ENCODE measurements at regions of chr9 and their contacts with region 1.

Region 1: DNA sequence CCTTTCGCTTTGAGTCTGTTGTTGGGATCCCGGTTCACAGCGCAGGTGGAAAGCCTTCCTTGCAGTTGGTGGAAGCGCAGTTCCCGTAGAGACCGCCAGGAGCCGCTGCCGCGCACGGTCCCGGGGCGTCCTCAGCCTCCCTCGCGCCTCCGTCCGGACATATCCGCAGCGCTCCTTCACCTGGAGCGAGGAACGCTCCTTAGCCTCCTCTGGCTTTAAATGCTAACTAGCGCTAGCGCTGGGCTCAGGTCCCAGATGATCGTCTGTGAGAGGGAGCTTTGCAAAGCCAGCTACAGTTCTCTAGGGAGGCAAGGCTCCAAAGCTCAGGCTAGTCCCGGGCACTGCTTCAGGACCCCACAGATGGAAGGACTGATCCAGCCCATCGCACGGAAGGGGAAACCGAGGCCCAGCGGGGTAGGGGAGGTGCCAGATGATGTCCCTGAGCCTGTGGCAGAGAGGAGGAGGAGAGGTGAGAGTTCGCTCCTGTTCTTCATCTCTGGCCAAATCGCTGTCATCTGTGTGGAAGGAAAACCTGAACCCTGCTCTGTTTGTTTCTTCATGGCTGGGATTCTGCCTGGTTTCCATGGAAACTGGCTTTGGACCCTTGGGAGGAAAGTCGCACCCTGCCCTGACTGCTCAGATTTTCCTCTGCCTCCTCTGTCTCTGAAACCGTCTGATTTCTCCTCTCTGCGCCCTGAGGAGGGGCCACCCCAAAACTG is 31.4 kb downstream of the COL15A1 start:
- DNase-seq: peak; percentile 87 to 91
- ATAC-seq: peak; percentile 60 to 80 (median 72)
- H3K4me3 ChIP-seq: peak overlapping the region in 9 of 10 donors; percentile 2 to 44 (median 34)
- H3K27ac ChIP-seq: peak overlapping the region; percentile 20 to 92 (median 72)
- H3K4me1 ChIP-seq: peaks cover 33 to 100% (median 80%) of the 10 kb centered on the region in 9 donors
- H3K27me3 ChIP-seq: peaks cover 0 to 15% (median 0%) of the 10 kb centered on the region in 7 donors
- CTCF ChIP-seq: peak; percentile 98 to 100 (median 99)

Region 2: GRCh38 chr9:98848450-98849149 is 126.6 kb before region 1 on chr9:
- intact Hi-C with region 1: no loop called
- DNase-seq: peak; percentile 89 to 92
- ATAC-seq: peak; percentile 95 to 99 (median 98)
- H3K4me3 ChIP-seq: peak overlapping the region; percentile 15 to 50 (median 35)
- H3K27ac ChIP-seq: peak overlapping the region in 6 of 10 donors; percentile 13 to 50 (median 40)
- H3K4me1 ChIP-seq: peaks cover 0 to 17% (median 6%) of the 10 kb centered on the region in 9 donors
- H3K27me3 ChIP-seq: peaks cover 0 to 3% (median 0%) of the 10 kb centered on the region in 7 donors
- CTCF ChIP-seq: peak; percentile 73 to 98 (median 95)

Region 3: DNA sequence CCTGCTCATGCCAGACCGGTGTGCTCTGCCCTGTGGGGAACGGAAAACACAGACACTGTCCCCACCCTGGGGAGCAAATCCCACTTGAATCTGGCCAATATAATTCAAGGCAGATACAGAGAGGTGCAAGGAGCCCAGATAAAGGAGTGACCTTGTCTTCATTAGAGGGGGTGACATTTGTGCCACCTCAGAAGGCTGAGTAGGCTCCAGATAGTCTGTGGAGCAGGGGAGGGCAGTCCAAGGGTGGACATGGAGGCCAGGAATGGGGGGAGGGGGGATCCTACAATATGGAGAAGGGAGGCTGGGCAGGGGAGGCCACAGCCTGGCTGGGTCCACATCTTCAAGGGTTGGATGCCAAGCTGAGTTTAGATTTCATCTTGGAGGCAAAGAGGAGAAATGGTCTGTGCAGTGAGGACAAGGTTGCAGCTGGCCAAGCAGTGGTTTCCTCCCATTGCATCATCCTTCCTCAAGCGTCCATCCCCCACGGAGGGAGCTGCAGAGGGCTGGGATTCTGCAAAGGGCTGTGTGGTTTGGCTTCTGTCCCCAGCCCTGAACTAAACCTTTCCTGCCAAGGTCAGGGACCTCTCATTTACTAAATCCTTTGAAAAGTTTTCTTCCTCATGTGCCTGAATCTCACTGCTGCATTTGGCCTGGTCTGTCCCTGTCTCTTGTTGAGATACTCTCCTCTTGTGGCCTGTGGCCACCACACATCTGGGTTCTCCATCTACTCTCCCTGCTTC is 107.6 kb before region 1 on chr9:
- intact Hi-C with region 1: loop called in 5 of 10 experiments (anchors 2 to 5 kb)
- DNase-seq: peak; percentile 73 to 88
- ATAC-seq: peak; percentile 81 to 93 (median 89)
- H3K4me3 ChIP-seq: no peak overlapping the region
- H3K27ac ChIP-seq: peak overlapping the region; percentile 75 to 90 (median 82)
- H3K4me1 ChIP-seq: peaks cover 6 to 82% (median 63%) of the 10 kb centered on the region in 9 donors
- H3K27me3 ChIP-seq: no peaks in the 10 kb centered on the region
- CTCF ChIP-seq: no peak

Region 4: DNA sequence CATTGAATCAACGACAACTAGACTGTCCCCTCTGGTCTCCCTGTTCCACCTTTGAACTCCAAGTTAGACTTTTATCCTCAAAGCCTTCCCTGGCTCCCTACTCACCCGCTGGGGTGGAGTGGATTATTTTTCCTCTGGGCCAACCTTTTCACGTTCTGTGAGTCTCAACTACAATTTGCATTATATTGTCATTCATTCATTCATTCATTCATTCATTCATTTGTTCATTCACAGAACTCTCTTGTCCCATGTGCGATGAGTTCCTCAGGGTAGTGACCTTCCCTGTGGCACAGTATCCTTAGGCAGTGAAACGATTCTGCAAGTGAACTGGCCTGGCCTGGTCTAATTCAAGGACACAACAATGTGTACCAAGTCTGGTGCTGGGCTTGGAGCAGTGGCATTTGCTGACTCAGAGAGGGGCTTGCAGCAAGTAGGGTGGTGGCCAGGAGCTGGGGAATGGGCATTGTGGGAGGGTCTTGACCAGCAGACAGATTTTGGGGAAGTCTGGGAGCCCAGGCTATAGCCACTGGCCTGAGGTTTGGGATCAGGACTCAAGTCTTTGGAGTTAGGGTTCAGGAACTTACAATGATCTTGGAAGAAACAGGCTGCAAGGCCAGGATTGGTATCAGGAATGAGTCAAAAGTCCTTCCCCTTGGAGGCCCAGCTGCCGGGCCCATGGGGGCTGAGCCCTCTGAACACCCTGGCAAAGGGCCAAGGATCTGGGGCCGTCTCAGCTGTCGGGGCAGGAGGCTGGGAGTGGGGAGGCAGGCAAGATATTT is 68.7 kb before region 1 on chr9:
- intact Hi-C with region 1: loop called in 1 of 10 experiments (anchors 5 kb)
- DNase-seq: peak; percentile 55 to 73
- ATAC-seq: peak in 2 of 8 donors; percentile 47 to 62
- H3K4me3 ChIP-seq: no peak overlapping the region
- H3K27ac ChIP-seq: peak overlapping the region in 9 of 10 donors; percentile 12 to 86 (median 75)
- H3K4me1 ChIP-seq: peaks cover 16 to 71% (median 50%) of the 10 kb centered on the region in 9 donors
- H3K27me3 ChIP-seq: no peaks in the 10 kb centered on the region
- CTCF ChIP-seq: no peak

Region 5: DNA sequence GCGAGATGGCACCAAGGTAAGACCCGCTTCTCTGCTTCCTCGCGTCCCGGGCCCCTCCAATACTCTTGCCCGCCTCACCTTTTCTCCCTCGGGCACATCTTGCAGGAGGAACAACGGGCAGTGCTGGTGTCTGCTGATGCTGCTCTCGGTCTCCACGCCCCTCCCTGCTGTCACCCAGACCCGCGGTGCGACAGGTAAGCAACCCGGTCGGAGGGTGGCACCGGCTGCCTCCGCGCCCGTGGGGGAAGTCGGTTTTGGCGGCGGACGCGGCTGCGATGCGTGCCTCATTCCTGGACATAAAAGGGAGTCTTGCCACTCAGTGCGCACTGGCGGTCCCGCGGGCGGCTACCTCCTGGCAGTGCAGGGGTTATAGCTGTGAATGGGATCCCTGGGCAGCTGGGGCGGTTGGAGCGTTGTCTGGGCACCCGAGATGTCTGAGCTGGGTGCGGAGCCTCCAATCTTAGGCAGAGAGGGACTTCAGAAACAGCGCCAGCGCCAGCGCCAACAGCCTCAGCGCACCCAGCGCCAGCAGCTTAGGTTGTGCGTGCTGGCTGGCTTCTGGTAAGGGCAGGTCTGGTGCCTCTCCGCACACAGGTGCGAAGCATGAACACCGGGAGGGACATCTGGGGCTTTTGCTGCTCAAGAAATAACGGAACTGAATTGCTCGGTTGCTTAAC is 31.0 kb before region 1 on chr9:
- intact Hi-C with region 1: loop called in 2 of 10 experiments (anchors 5 kb)
- DNase-seq: peak in 1 of 2 donors; percentile 34
- ATAC-seq: peak; percentile 21 to 61 (median 48)
- H3K4me3 ChIP-seq: peak overlapping the region; percentile 54 to 88 (median 74)
- H3K27ac ChIP-seq: peak overlapping the region; percentile 62 to 96 (median 86)
- H3K4me1 ChIP-seq: peaks cover 3 to 87% (median 35%) of the 10 kb centered on the region in 9 donors
- H3K27me3 ChIP-seq: peaks cover 0 to 53% (median 0%) of the 10 kb centered on the region in 7 donors
- CTCF ChIP-seq: no peak

Region 6: GRCh38 chr9:98989036-98990000 is 14.2 kb after region 1 on chr9:
- intact Hi-C with region 1: loop called in 1 of 10 experiments (anchors 2 kb)
- DNase-seq: peak; percentile 59 to 89
- ATAC-seq: peak; percentile 50 to 88 (median 82)
- H3K4me3 ChIP-seq: no peak overlapping the region
- H3K27ac ChIP-seq: peak overlapping the region in 9 of 10 donors; percentile 43 to 92 (median 64)
- H3K4me1 ChIP-seq: peaks cover 15 to 86% (median 58%) of the 10 kb centered on the region in 9 donors
- H3K27me3 ChIP-seq: no peaks in the 10 kb centered on the region
- CTCF ChIP-seq: peak in 3 of 9 donors; percentile 9 to 33 (median 25)

Region 7: GRCh38 chr9:99012942-99013512 is 37.9 kb after region 1 on chr9:
- intact Hi-C with region 1: loop called in 1 of 10 experiments (anchors 1 kb)
- DNase-seq: no peak
- ATAC-seq: peak; percentile 58 to 89 (median 78)
- H3K4me3 ChIP-seq: no peak overlapping the region
- H3K27ac ChIP-seq: peak overlapping the region in 1 of 10 donors; percentile 24
- H3K4me1 ChIP-seq: peaks cover 0 to 6% (median 0%) of the 10 kb centered on the region in 9 donors
- H3K27me3 ChIP-seq: no peaks in the 10 kb centered on the region
- CTCF ChIP-seq: peak; percentile 29 to 69 (median 60)

Region 8: DNA sequence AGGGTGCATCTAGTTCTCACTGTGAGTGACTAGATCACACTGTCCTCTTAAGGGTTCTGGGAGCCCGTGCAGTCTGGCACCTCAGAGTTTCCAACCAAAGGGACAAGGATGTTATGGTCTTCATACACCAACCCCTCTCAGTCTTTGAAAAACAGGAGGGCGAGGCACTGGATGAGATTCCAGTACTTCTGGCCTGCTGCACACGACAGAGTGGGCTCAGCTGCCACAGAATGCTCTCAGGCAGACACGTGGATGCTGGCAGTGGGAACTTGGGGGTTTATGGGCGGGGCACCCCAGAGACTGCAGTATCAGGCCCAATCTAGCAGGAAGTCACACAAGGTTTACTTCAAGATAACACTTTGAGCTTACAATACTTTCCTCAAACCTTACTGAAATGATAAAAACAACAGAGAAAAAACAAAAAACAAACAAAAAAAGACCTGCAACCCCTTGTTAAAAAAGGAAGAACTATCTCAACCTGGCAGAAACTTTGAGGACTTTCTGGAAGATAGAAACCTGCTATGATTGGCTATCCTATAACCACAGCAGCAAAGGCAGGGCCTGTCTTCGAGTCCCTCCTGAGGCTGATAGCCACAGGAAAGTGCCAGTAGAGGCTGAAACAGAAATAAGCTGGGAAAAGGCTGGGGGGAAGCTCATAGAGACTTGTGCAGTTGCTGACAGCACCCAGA is 101.5 kb after region 1 on chr9:
- intact Hi-C with region 1: no loop called
- DNase-seq: no peak
- ATAC-seq: peak in 5 of 8 donors; percentile 14 to 43 (median 35)
- H3K4me3 ChIP-seq: no peak overlapping the region
- H3K27ac ChIP-seq: peak overlapping the region in 6 of 10 donors; percentile 14 to 79 (median 38)
- H3K4me1 ChIP-seq: peaks cover 0 to 45% (median 29%) of the 10 kb centered on the region in 9 donors
- H3K27me3 ChIP-seq: no peaks in the 10 kb centered on the region
- CTCF ChIP-seq: no peak